ENCODE measurements at regions of chrX and their contacts with region 1.

Region 1: GRCh38 chrX:13734278-13735172 is at the starts of genes OFD1 and TRAPPC2:
- DNase-seq: peak; percentile 75 to 95 (median 90)
- ATAC-seq: peak; percentile 84
- H3K4me3 ChIP-seq: peak within 1 kb of the TSS; percentile 62 to 92
- H3K4me3 Mint-ChIP-seq: peak within 1 kb of the TSS; percentile 97
- H3K27ac ChIP-seq: peak within 1 kb of the TSS; percentile 93 to 99
- H3K27ac Mint-ChIP-seq: peak within 1 kb of the TSS; percentile 99
- H3K4me1 ChIP-seq: peaks cover 46% of the 10 kb centered on the region
- H3K4me1 Mint-ChIP-seq: peaks cover 54% of the 10 kb centered on the region
- H3K27me3 ChIP-seq: no peaks in the 10 kb centered on the region
- H3K27me3 Mint-ChIP-seq: no peaks in the 10 kb centered on the region
- CTCF ChIP-seq: no peak
- total RNA-seq, gene OFD1: 49.2 to 56.7 TPM
- total RNA-seq, gene TRAPPC2: 20.5 to 24.6 TPM

Region 2: GRCh38 chrX:13653022-13653693 is 81.4 kb before region 1 on chrX and contains the start of gene TCEANC:
- CTCF ChIA-PET with region 1: no interaction called
- POLR2A ChIA-PET with region 1: interaction called, 7 read pairs
- intact Hi-C with region 1: loop called (anchors 1 to 5 kb)
- DNase-seq: peak; percentile 82 to 97 (median 95)
- ATAC-seq: peak; percentile 93
- H3K4me3 ChIP-seq: peak within 1 kb of the TSS; percentile 63 to 90
- H3K4me3 Mint-ChIP-seq: peak within 1 kb of the TSS; percentile 92
- H3K27ac ChIP-seq: peak within 1 kb of the TSS; percentile 85 to 95
- H3K27ac Mint-ChIP-seq: peak within 1 kb of the TSS; percentile 98
- H3K4me1 ChIP-seq: peaks cover 17% of the 10 kb centered on the region
- H3K4me1 Mint-ChIP-seq: peaks cover 30% of the 10 kb centered on the region
- H3K27me3 ChIP-seq: no peaks in the 10 kb centered on the region
- H3K27me3 Mint-ChIP-seq: no peaks in the 10 kb centered on the region
- CTCF ChIP-seq: no peak
- total RNA-seq, gene TCEANC: 8.2 to 9.5 TPM

Region 3: GRCh38 chrX:13688958-13689740 is 45.4 kb before region 1 on chrX and contains the start of gene RAB9A:
- CTCF ChIA-PET with region 1: interaction called, 5 read pairs
- POLR2A ChIA-PET with region 1: interaction called, 16 read pairs
- intact Hi-C with region 1: loop called (anchors 1 kb)
- DNase-seq: peak; percentile 58 to 85 (median 78)
- ATAC-seq: peak; percentile 88
- H3K4me3 ChIP-seq: peak within 1 kb of the TSS; percentile 79 to 82
- H3K4me3 Mint-ChIP-seq: peak within 1 kb of the TSS; percentile 95
- H3K27ac ChIP-seq: peak within 1 kb of the TSS; percentile 80 to 90
- H3K27ac Mint-ChIP-seq: peak within 1 kb of the TSS; percentile 98
- H3K4me1 ChIP-seq: peaks cover 25% of the 10 kb centered on the region
- H3K4me1 Mint-ChIP-seq: peaks cover 60% of the 10 kb centered on the region
- H3K27me3 ChIP-seq: no peaks in the 10 kb centered on the region
- H3K27me3 Mint-ChIP-seq: no peaks in the 10 kb centered on the region
- CTCF ChIP-seq: no peak
- total RNA-seq, gene RAB9A: 19.4 to 21.5 TPM

Region 4: GRCh38 chrX:13750204-13750603 is 15.7 kb after region 1 on chrX:
- CTCF ChIA-PET with region 1: interaction called, 8 read pairs
- POLR2A ChIA-PET with region 1: interaction called, 4 read pairs
- intact Hi-C with region 1: loop called in 1 of 2 experiments (anchors 2 kb)
- DNase-seq: peak in 3 of 9 experiments; percentile 12 to 65 (median 53)
- ATAC-seq: peak; percentile 63
- H3K4me3 ChIP-seq: no peak overlapping the region
- H3K4me3 Mint-ChIP-seq: no peak overlapping the region
- H3K27ac ChIP-seq: peak overlapping the region in 1 of 2 experiments; percentile 36
- H3K27ac Mint-ChIP-seq: peak overlapping the region; percentile 64
- H3K4me1 ChIP-seq: peaks cover 6% of the 10 kb centered on the region
- H3K4me1 Mint-ChIP-seq: peaks cover 30% of the 10 kb centered on the region
- H3K27me3 ChIP-seq: no peaks in the 10 kb centered on the region
- H3K27me3 Mint-ChIP-seq: no peaks in the 10 kb centered on the region
- CTCF ChIP-seq: peak; percentile 37